ENCODE measurements at regions of chr17 and their contacts with region 1.

Region 1: DNA sequence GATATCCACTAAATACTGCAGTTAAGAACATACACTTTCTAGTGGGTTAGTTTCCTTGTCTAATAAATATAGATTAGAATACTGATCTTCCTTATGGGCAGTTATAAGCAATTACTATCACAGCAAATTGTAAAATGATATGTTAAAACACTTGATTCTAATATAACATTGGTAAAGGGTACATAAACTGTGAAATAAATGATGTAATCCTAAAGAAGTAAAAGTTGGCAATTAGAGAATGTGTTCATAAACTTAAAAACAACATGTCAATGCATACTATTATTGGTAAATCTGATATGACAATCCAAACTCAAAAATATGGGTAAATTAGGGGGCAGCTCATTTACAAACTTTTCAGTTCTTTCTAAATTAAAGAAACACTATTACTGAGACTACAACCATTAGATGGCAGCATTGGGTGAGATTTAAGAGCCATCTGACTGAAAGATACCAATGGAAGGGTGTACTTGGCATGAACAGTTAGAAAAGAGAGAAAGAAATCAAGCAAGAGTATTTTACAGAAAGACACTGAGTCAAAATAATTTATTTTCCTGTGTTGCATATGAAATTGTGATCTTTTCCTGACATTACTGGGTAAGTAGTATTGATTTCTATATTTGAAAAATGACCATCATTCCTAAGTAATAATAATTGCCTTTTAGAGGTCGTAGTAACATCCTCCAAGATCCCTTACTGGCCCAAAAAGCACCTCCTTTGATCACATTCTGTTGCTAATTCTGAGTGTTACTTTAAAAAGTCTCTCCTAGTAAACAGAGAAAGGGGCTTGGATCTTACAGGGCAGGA is 119.6 kb downstream of the SPAG9 start:
- DNase-seq: peak in 2 of 5 donors; percentile 78 to 89
- H3K4me3 ChIP-seq: no peak overlapping the region
- H3K27ac ChIP-seq: no peak overlapping the region
- H3K4me1 ChIP-seq: no peaks in the 10 kb centered on the region
- H3K27me3 ChIP-seq: no peaks in the 10 kb centered on the region
- CTCF ChIP-seq: peak; percentile 43

Region 2: DNA sequence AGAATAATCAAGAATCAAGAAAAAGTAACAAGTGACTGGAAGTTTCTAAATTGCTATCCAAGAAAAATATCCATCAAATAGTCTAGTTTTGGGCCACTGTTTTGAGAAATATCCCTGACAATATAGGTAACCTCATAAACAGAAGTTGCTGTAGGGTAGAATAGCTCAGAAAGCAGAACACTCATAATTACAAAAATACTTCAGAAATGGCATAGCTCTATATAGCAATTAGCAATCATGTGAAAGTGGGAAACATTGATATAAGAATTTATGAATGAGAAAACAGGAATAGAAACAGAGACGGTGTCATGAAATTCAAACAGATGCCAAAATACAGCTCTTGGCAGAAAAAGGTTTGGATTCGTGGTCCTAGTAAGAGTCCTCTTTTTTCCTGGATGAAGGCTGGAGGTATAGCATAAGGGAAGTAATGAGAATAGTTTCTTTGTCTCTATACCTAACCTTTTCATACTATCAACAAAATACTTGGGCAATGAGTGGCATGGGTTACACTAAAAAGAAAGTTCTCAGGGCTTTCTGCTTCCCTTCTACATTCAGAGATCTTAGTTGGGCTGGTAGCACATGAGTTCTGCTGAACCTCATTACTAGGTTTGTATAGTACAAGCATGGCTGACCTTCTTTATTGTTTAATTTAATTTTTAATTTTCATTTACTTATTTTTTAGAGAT is 86.2 kb after region 1 on chr17:
- intact Hi-C with region 1: no loop called
- DNase-seq: no peak
- H3K4me3 ChIP-seq: no peak overlapping the region
- H3K27ac ChIP-seq: no peak overlapping the region
- H3K4me1 ChIP-seq: peaks cover 2 to 10% (median 7%) of the 10 kb centered on the region in 3 donors
- H3K27me3 ChIP-seq: no peaks in the 10 kb centered on the region
- CTCF ChIP-seq: no peak

Region 3: GRCh38 chr17:51147650-51148049 is 146.6 kb after region 1 on chr17:
- intact Hi-C with region 1: loop called (anchors 10 kb)
- DNase-seq: no peak
- H3K4me3 ChIP-seq: no peak overlapping the region
- H3K27ac ChIP-seq: no peak overlapping the region
- H3K4me1 ChIP-seq: peaks cover under 1 to 4% (median 3%) of the 10 kb centered on the region in 3 donors
- H3K27me3 ChIP-seq: no peaks in the 10 kb centered on the region
- CTCF ChIP-seq: no peak